Ovary (tissue), 10 donors: ENCODE measurements at regions of chr1 and their contacts with region 1.

Region 1: DNA sequence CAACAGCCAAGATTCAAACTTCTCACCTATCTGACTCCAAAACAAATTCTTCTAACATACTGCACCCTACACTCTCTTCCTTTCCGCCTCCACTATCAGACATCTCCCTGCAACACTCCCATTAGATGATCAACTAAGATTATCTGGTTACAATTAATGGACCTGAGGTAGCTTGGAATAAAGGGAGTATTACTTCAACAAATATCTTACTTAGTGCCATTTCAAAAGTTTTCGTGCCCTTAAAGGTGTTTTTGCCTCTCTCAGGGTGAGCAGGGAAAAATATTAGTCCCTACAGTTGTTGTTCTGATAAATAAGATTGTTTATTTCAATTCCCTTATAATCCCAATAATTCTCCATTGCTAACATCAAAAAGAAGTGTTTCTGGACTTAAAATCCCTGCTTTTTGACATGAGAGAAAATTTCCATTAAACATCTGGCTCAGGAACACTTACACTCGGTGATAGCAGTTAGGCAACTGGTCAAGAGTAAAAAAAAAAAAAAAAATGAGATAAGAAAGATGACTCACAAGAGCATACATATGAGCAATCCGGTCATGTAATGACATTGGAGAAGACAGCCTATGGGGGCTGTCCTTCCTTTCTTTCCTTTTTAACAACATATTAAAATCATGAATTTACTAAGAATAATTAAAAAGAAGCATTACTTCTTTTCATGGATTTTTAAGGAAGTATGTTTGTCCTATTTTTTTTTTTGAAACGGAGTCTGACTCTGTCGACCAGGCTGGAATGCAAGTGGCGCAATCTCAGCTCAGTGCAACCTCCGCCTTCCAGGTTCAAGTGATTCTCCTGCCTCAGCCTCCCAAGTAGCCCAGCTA is 7.6 kb downstream of the RSBN1 start:
- DNase-seq: no peak
- H3K4me3 ChIP-seq: no peak overlapping the region
- H3K27ac ChIP-seq: peak overlapping the region in 1 of 2 donors; percentile 24
- H3K4me1 ChIP-seq: peaks cover 8% of the 10 kb centered on the region
- H3K27me3 ChIP-seq: no peaks in the 10 kb centered on the region
- CTCF ChIP-seq: no peak
- EP300 ChIP-seq: no peak
- POLR2A ChIP-seq: no peak

Region 2: GRCh38 chr1:113759333-113760101 is 45.1 kb before region 1 on chr1 and contains the start of gene PHTF1:
- intact Hi-C with region 1: loop called in 1 of 4 experiments (anchors 5 kb)
- DNase-seq: peak; percentile 71 to 83 (median 75)
- H3K4me3 ChIP-seq: peak within 1 kb of the TSS; percentile 81
- H3K27ac ChIP-seq: peak within 1 kb of the TSS; percentile 72 to 89
- H3K4me1 ChIP-seq: no peaks in the 10 kb centered on the region
- H3K27me3 ChIP-seq: no peaks in the 10 kb centered on the region
- CTCF ChIP-seq: no peak
- EP300 ChIP-seq: no peak
- POLR2A ChIP-seq: peak; percentile 37
- total RNA-seq, gene PHTF1: 6.6 to 28.6 (median 9.7) TPM

Region 3: DNA sequence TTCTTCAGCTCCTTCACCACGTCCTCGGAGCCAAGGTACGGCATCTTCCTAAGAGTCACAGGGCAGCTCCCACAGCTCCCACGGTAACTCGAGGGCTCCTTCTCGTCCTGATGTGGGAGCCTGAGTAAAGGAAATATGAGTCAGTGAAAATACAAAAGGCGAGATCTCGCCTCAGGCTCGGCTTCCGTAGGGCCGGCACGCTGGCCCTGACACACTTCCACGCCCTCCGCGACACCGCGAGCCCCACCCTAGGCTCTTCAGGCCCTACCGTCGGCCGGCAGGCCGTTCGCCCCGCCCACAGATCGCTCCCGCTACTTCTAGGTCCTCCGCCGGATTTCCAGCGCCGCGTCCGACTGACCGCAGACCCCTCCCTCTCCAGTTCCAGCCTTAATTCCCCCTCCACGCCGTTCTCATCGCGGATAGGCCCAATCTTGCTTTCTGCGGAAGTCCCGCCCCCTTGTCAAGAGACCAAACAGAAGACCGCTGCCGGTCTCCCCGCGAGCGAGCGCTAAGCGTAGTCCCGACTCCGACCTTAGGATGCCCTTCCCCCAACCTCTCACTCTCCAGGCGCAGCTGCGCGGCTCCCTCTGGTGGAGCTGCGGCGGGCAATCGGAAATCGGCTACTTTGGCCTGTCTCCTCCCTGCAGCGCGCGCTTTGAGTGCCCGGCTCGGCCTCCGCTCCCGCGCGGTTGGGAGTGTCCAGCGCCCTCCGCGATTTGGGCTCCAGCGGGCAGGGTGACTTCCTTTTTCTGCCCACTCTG is 100.2 kb after region 1 on chr1 and contains the starts of genes AP4B1 and DCLRE1B:
- intact Hi-C with region 1: no loop called
- DNase-seq: peak; percentile 97 to 99 (median 98)
- H3K4me3 ChIP-seq: peak within 1 kb of the TSS; percentile 71
- H3K27ac ChIP-seq: peak within 1 kb of the TSS; percentile 77 to 86
- H3K4me1 ChIP-seq: peaks cover 2% of the 10 kb centered on the region
- H3K27me3 ChIP-seq: no peaks in the 10 kb centered on the region
- CTCF ChIP-seq: peak; percentile 77 to 93 (median 90)
- EP300 ChIP-seq: no peak
- POLR2A ChIP-seq: peak; percentile 54
- total RNA-seq, gene AP4B1: 14.4 to 23.3 (median 16.9) TPM
- total RNA-seq, gene DCLRE1B: 2.4 to 6.8 (median 5.0) TPM